ENCODE measurements at regions of chr17 and their contacts with region 1.

Region 1: DNA sequence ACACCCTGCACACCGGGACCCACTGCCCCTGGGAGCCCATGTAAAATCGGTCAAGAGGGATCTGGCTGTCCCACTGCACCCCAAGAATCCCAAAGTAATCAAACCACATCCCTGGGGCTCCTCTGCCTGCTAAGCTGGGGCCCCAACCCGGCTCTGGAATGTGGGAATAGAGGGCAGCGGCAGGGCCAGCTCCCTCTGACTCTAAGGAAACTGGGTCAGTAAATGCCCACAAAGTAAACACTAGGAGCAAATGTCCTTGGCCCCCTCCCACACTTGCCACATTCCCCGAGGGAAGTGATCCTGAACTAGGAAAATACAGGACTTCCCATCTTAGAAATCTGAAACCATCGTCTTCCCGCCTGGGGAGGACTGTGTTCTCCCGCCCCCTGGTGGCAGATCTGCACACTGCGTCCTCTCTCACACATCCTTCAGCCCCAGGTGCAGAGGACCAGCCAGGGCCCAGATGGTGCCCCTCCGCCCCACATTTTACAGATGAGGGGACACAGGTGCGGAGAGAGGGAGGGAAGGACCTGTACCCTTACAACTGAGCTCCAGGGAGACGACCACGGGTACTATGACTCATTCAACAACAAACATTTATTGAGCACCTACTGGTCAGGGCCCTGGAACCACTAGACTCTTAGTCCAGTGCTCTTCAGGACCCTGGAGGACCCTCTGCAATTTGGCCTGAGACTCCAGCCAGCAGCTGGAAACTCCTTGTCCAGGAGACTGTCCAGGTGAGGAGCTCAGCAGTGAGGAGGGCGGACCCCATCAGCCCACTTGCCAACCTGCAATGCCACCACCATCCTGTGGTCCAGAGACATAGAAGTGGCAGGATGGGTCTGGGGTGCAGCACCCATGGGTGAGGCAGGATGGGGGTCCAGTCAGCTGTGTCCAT is 10.1 kb downstream of the P3H4 start:
- H3K4me3 ChIP-seq: peak overlapping the region; percentile 10; the same call in 1 of the 2 replicates
- H3K27ac ChIP-seq: no peak overlapping the region; the same call in 1 of the 2 replicates
- H3K4me1 ChIP-seq: peaks cover 6% of the 10 kb centered on the region
- CTCF ChIP-seq: peak; percentile 93

Region 2: GRCh38 chr17:41717408-41718286 is 84.0 kb before region 1 on chr17:
- CTCF ChIA-PET with region 1: interaction called, 12 read pairs
- POLR2A ChIA-PET with region 1: no interaction called
- H3K4me3 ChIP-seq: no peak overlapping the region
- H3K27ac ChIP-seq: no peak overlapping the region
- H3K4me1 ChIP-seq: 0 out of 2 replicates have a peak, but pooled peaks cover 4% of the 10 kb centered on the region
- CTCF ChIP-seq: no peak

Region 3: DNA sequence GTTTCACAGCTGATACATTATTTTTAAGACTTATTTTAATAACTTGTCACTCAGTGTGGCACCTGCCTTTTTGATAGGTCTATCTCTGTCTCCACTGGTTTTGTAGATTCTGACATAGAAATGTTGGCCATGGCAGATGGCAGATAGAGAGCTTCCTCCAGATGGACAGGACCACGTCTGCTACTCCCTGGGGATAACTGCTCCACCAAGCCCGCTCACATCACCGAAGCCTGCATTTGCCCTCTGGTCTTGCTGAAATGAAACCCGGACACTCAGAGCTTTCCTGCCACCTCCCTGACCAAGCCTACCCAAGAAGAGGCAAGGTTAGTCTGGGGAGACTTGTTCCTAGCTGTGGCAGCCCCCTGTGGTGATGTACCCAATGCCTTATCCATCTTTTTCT is 50.8 kb before region 1 on chr17:
- CTCF ChIA-PET with region 1: interaction called, 14 read pairs
- POLR2A ChIA-PET with region 1: interaction called, 4 read pairs
- H3K4me3 ChIP-seq: no peak overlapping the region
- H3K27ac ChIP-seq: no peak overlapping the region
- H3K4me1 ChIP-seq: no peaks in the 10 kb centered on the region
- CTCF ChIP-seq: no peak

Region 4: GRCh38 chr17:41762841-41763240 is 38.8 kb before region 1 on chr17:
- CTCF ChIA-PET with region 1: interaction called, 12 read pairs
- POLR2A ChIA-PET with region 1: no interaction called
- H3K4me3 ChIP-seq: no peak overlapping the region
- H3K27ac ChIP-seq: no peak overlapping the region
- H3K4me1 ChIP-seq: no peaks in the 10 kb centered on the region
- CTCF ChIP-seq: no peak

Region 5: DNA sequence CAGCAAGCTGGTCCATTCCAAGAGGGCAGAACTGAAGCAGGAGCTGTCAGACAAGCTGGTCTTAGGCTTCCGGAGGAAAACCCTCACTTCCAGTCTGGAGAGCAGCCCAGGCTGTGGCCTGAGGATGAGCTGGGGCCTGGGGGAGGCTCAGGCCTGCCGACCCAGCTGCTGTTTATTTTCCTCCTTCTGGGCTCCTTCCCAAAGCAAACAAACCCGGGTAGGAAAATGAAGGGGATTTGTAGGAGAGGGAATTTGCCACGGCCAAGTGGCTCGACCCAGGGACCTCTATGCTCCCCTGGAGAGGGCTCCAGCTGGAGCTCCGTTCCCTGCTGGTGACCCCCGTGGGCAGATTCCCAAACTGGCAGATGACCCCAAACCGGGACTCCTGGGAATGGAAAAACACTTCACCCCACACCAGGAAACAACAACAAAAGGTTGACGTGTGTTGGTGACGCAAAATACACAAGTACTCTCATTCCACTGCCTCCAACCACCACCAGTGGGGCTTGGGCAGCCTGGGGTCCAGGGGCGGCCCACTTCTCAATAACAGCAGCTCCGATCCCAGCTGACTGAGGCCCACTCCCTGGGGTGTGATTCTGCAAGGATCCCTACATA is 23.9 kb before region 1 on chr17:
- CTCF ChIA-PET with region 1: interaction called, 12 read pairs
- POLR2A ChIA-PET with region 1: interaction called, 8 read pairs
- H3K4me3 ChIP-seq: no peak overlapping the region
- H3K27ac ChIP-seq: peak overlapping the region; percentile 78
- H3K4me1 ChIP-seq: peaks cover 14% of the 10 kb centered on the region
- CTCF ChIP-seq: no peak

Region 6: DNA sequence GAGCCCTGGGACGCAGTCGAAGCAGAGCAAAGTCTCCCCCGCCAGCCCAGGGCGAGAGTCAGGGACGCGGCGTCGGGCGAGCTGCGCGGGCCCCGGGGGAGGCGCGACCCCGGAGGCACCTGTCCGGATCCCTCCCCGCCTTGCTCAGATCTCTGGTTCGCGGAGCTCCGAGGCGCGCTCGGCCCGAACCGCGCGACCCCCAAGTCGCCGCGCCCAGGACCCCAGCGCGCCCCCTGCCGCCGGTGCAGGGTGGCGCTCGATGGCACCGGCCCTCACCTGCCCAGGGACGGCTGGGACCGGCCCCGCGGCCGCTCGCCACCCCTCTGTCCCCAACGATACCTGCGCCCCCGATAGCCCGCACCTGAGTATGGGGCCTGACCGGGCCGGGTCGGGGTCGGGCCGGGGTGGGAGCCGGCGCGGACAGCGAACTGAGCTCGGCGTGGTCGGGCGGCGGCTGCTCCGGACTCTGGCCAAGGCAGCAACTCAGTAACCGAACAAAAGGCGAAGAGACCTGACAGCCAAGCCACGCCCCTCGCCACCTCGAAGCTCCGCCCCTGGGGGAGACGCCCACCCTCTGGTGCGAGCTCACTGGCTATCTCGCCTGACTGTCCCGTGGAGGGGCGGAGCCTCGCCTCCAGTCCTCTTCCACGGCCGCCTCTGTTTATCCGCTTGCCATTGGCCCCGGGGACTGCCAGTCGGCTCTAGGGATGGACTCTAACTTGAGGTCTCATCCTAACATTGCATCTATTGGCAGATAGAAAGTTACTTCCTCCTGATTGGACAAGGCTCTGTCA is 15.2 kb before region 1 on chr17 and contains the start of gene JUP:
- CTCF ChIA-PET with region 1: interaction called, 108 read pairs
- POLR2A ChIA-PET with region 1: interaction called, 105 read pairs
- H3K4me3 ChIP-seq: peak within 1 kb of the TSS; percentile 61
- H3K27ac ChIP-seq: peak within 1 kb of the TSS; percentile 53; the same call in 1 of the 2 replicates
- H3K4me1 ChIP-seq: peaks cover 12% of the 10 kb centered on the region
- CTCF ChIP-seq: peak; percentile 40

Region 7: GRCh38 chr17:41873559-41874292 is 72.1 kb after region 1 on chr17:
- CTCF ChIA-PET with region 1: no interaction called
- POLR2A ChIA-PET with region 1: no interaction called
- H3K4me3 ChIP-seq: no peak overlapping the region
- H3K27ac ChIP-seq: no peak overlapping the region
- H3K4me1 ChIP-seq: no peaks in the 10 kb centered on the region
- CTCF ChIP-seq: no peak